Posterior cingulate gyrus (tissue), 11 donors: ENCODE measurements at regions of chr12 and their contacts with region 1.

Region 1: DNA sequence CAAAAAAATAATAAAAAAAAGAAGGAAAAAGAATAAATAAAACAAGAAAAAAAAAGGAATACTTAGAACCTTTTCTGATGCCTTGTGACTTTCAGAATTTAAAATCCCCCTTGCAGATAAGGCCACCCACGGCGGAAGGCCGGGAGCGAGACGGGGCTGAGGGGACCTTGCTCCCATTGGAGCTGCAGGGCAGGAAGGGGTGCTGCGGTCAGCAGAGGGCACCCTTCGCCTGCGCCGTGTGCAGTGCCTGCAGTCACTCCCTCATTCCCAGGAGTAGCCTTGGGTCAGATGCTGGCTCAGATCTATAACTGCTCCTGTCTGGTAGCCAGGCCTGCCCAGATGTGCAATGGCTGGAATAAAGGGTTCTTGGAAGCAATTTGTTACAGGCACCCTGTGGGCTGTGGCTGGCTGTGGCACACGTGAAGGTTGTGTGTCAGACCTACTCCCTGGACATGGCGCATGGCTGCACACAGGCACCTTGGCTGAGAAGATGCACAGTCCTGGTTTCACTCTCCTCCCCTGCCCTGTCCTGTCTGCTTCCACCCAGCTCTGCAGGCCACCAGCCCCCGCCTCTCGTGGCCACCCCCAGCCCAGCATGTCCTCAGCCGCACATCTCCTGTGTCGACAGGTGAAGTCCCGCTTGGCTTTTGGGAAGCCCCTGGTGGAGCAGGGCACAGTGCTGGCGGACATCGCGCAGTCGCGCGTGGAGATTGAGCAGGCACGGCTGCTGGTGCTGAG is 13.4 kb upstream of the ALDH2 start:
- DNase-seq: peak in 9 of 10 donors; percentile 37 to 94 (median 62)

Region 2: DNA sequence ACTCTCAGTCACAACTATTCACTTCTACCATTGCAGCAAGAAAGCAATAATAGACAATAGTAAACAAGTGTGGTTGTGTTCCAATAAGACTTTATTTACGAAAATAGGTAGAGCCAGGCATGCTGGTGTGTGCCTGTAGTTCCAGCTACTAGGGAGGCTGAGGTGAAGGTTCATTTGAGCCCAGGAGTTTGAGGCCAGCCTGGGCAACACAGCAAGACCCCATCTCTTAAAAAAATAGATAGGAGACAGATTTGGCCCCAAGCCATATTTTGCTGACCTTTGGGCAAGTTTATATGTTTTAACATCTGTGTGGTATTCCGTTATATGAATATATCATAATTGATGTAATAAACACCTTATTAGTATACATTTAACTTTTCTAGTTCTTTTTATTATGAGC is 53.4 kb before region 1 on chr12:
- intact Hi-C with region 1: no loop called
- DNase-seq: no peak

Region 3: GRCh38 chr12:111788178-111788654 is 34.9 kb after region 1 on chr12:
- intact Hi-C with region 1: loop called (anchors 1 kb)
- DNase-seq: peak in 1 of 10 donors; percentile 16

Region 4: DNA sequence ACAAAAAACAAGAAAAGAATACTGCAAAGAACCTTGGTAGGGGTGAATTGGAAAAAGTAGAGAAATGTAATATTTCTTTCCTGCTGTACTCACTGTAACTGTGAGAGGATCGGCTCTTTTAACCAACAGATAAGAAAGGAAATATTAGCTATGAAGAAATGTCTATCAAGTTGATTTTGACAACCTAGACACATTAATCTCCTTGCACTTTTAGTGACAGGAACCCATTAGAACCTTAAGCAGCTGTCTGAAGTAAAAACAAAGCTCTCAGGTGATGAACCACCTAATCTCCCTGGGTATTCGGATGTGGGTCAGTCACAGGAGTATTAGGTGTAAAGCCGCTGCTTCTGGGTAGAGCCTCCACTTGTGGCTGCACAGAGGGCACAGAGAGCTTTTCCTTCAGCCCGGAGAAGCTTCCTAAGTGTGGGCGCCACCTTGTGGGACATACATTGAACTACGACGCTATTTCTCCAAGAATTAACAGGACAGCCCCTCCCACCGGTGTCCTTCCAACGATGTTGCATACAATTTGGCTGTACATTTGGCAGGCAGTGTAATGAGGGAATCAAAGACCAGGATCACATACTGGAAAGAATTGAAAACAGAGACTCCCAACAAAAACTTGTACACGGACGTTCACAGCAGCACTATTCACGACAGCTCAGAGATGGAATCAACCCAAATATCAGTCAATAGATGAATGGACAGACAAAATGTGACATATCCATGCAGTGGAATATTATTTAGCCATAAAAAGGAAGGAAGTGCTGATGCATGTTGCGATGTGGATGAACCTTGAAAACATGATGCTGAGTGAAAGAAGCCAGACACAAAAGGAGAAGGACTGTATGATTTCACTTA is 59.8 kb after region 1 on chr12:
- intact Hi-C with region 1: loop called (anchors 1 kb)
- DNase-seq: peak in 9 of 10 donors; percentile 42 to 93 (median 71)

Region 5: DNA sequence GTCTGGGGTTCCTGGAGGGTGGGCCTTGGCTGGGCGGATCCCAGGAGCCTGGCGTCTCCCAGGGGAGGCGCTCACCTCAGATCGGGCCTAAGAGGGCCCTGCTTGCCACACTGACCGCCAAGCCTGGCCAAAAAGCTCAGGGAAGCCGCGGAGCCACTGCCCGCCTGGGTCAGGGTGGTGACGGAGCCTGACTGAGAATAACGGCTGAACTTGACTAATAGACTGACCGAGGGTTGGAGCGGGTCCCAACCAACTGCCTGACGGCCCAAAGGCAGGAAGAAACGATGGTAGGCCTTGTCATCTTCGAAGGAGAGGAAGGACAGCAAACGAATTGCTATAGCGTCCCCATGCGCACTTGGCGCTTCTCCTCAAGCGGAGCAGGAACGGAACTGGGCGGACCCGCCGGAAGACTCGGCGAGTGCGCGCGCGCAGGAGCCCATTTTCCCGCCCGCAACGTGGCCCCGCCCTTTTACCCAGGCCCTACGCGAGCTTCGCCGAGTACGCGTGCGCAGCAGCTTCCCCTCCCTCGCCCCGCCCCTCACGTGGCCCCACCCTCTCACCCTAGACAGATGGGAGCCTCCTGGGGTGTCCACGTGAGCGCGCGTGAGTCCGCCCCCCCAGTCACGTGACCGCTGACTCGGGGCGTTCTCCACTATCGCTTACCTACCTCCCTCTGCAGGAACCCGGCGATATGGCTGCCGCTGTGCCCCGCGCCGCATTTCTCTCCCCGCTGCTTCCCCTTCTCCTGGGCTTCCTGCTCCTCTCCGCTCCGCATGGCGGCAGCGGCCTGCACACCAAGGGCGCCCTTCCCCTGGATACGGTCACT is 259.7 kb after region 1 on chr12 and contains the starts of genes ERP29 and TMEM116:
- intact Hi-C with region 1: loop called (anchors 5 kb)
- DNase-seq: peak; percentile 99 to 100 (median 100)